ENCODE measurements at regions of chr14 and their contacts with region 1.

Region 1: DNA sequence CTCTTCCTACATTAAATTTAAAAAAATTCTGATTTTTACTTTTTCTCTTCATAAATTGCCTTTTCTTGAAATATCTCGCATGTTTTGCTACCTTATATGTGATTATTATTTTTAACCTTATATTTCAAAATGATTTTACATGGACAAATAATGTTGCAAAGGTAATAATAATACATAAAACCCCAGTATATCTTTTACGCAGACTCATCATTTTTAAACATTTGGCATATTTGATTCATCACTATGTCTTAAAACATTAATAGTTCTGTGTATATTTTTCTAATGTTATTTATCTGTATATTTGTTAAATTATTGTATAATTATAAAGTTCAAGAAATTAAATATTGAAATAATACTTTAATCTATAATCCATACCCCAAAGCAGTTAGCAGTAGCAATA is 350.8 kb downstream of the RPL10L start:
- DNase-seq: no peak
- ATAC-seq: no peak
- H3K4me3 ChIP-seq: no peak overlapping the region
- H3K27ac ChIP-seq: no peak overlapping the region
- H3K4me1 ChIP-seq: no peaks in the 10 kb centered on the region
- H3K27me3 ChIP-seq: no peaks in the 10 kb centered on the region
- CTCF ChIP-seq: no peak
- EP300 ChIP-seq: no peak
- POLR2A ChIP-seq: no peak
- RAD21 ChIP-seq: no peak

Region 2: DNA sequence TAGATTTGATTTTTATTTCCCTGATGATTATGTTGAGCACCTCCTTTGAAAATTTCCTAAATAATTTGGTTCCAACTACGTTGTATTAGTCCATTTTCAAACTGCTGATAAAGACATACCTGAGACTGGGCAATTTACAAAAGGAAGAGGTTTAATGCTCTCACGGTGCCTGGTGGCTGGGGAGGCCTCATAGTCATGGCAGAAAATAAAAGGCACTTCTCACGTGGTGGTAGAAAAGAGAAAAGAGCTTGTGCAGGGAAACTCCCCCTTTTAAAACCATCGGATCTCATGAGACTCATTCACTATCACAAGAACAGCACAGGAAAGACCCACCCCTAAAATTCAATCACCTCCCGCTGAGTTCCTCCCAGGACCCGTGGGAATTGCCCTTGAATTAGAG is 21.4 kb before region 1 on chr14:
- CTCF ChIA-PET with region 1: no interaction called
- POLR2A ChIA-PET with region 1: no interaction called
- RAD21 ChIA-PET with region 1: no interaction called
- SMC1A ChIA-PET with region 1: no interaction called
- in situ Hi-C with region 1: no loop called
- intact Hi-C with region 1: no loop called
- DNase-seq: no peak
- ATAC-seq: peak; percentile 50
- H3K4me3 ChIP-seq: no peak overlapping the region
- H3K27ac ChIP-seq: no peak overlapping the region
- H3K4me1 ChIP-seq: no peaks in the 10 kb centered on the region
- H3K27me3 ChIP-seq: no peaks in the 10 kb centered on the region
- CTCF ChIP-seq: no peak
- EP300 ChIP-seq: no peak
- POLR2A ChIP-seq: no peak
- RAD21 ChIP-seq: no peak

Region 3: GRCh38 chr14:46290706-46291105 is 10.1 kb before region 1 on chr14:
- CTCF ChIA-PET with region 1: no interaction called
- POLR2A ChIA-PET with region 1: no interaction called
- RAD21 ChIA-PET with region 1: no interaction called
- SMC1A ChIA-PET with region 1: interaction called, 3 read pairs
- in situ Hi-C with region 1: no loop called
- intact Hi-C with region 1: loop called (anchors 1 kb)
- DNase-seq: no peak
- ATAC-seq: no peak
- H3K4me3 ChIP-seq: no peak overlapping the region
- H3K27ac ChIP-seq: no peak overlapping the region
- H3K4me1 ChIP-seq: no peaks in the 10 kb centered on the region
- H3K27me3 ChIP-seq: no peaks in the 10 kb centered on the region
- CTCF ChIP-seq: no peak
- EP300 ChIP-seq: no peak
- POLR2A ChIP-seq: no peak
- RAD21 ChIP-seq: no peak

Measured in GM12878 (cell line).